Left lung (tissue), 14 donors: ENCODE measurements at regions of chrX and their contacts with region 1.

Region 1: DNA sequence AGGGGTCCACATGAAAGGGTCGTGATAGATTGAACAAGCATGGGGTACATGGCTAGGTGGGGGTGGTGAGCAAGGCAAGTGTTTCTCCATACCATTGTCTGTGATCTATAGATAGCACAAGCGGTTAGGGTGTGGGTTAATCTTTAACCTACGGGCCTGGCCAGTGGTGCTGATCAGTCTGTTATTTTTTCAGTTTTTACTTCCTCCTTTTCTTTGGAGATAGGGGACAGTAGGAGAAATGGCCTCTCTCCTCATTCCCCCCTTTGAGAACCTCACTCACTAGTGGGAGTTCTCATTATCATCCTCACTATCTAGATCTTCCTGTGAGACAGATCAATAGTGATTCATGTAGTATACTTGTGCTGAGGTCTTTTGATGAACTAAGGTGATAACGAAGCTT is 16.2 kb upstream of the GPKOW start:
- DNase-seq: no peak
- ATAC-seq: no peak
- H3K4me3 ChIP-seq: no peak overlapping the region
- H3K27ac ChIP-seq: no peak overlapping the region
- H3K4me1 ChIP-seq: no peaks in the 10 kb centered on the region
- H3K27me3 ChIP-seq: no peaks in the 10 kb centered on the region
- CTCF ChIP-seq: no peak

Region 2: DNA sequence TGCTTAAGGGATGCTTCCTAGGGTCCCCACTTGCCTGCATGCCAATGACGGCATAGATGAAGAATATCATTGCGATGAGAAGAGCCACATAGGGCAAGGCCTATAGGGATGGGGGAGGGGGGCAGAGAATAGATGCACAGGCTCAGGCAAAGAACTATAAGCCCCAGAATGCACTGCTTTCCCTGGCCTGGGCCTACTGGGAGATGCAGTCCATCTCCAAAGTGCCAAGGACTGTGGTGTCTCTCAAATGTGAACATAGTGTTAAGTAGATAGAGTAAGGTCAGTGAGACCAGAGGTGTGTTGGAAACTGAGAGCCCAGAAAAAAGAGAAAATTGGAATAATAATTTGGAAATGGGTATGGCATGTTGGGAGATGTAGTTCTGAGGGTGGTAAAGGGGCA is 72.5 kb after region 1 on chrX:
- intact Hi-C with region 1: loop called in 1 of 2 experiments (anchors 2 kb)
- DNase-seq: no peak
- ATAC-seq: no peak
- H3K4me3 ChIP-seq: no peak overlapping the region
- H3K27ac ChIP-seq: no peak overlapping the region
- H3K4me1 ChIP-seq: no peaks in the 10 kb centered on the region
- H3K27me3 ChIP-seq: no peaks in the 10 kb centered on the region
- CTCF ChIP-seq: no peak

Region 3: GRCh38 chrX:49627086-49627777 is 487.5 kb after region 1 on chrX:
- intact Hi-C with region 1: no loop called
- DNase-seq: no peak
- ATAC-seq: peak; percentile 32
- H3K4me3 ChIP-seq: no peak overlapping the region
- H3K27ac ChIP-seq: no peak overlapping the region
- H3K4me1 ChIP-seq: no peaks in the 10 kb centered on the region
- H3K27me3 ChIP-seq: no peaks in the 10 kb centered on the region
- CTCF ChIP-seq: no peak